Dorsolateral prefrontal cortex (tissue), 120 donors: ENCODE measurements at regions of chr13 and their contacts with region 1.

Region 1: DNA sequence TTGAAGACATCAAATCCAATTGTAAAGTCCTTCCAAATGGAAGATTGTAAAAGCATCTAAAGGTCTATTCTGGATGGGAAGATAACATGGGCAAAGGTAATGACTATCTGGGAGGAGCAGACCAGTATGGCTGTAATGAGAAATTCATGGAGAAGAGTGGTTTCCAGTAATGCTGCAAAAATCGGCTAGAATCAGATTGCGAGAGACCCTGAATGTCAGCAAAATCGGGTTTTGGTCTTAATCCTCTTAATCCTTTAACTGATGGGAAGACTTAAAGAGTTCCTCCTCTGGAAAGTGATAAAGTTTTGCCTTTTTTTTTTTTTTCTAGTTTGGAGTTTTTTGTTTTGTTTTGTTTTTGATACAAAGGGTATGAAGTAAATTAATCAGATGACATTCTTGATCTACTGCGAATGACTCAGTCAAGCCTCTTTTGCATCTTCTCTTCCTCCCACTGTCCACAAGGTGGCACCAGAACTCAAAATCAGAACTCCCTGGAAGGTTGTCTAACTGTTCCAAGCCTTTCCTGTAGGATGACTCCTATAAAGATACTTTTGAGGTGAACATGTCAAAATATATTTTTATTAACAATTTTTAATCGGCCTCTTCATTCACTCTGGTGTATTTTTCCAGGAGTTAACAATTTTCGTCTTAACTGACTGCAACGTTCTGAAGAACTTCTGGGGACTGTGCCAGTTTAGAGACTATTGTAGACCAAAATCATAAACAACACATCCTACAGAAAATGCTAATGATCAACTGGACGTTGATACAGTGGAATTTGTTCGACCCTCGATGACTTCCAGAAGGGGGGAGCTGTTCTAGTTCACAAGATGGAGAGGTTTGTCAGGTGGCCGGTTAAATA is 213.3 kb upstream of the MIR17HG start:
- DNase-seq: peak in 6 of 10 donors; percentile 7 to 50 (median 44)
- H3K4me3 ChIP-seq: peak overlapping the region in 1 of 59 donors; percentile 14
- H3K27ac ChIP-seq: no peak overlapping the region
- H3K27me3 ChIP-seq: peaks cover 0 to 3% (median 0%) of the 10 kb centered on the region in 45 donors
- CTCF ChIP-seq: peak; percentile 51 to 92 (median 83)

Region 2: GRCh38 chr13:91111476-91112201 is 22.5 kb before region 1 on chr13:
- intact Hi-C with region 1: no loop called
- DNase-seq: no peak
- H3K4me3 ChIP-seq: no peak overlapping the region
- H3K27ac ChIP-seq: no peak overlapping the region
- H3K27me3 ChIP-seq: peaks cover 0 to 9% (median 0%) of the 10 kb centered on the region in 45 donors
- CTCF ChIP-seq: no peak

Region 3: GRCh38 chr13:91185294-91185863 is 51.2 kb after region 1 on chr13:
- intact Hi-C with region 1: loop called (anchors 2 to 10 kb)
- DNase-seq: no peak
- H3K4me3 ChIP-seq: peak overlapping the region in 1 of 59 donors; percentile 18
- H3K27ac ChIP-seq: no peak overlapping the region
- H3K27me3 ChIP-seq: peaks cover 0 to 20% (median 0%) of the 10 kb centered on the region in 45 donors
- CTCF ChIP-seq: peak in 53 of 56 donors; percentile 22 to 72 (median 54)

Region 4: DNA sequence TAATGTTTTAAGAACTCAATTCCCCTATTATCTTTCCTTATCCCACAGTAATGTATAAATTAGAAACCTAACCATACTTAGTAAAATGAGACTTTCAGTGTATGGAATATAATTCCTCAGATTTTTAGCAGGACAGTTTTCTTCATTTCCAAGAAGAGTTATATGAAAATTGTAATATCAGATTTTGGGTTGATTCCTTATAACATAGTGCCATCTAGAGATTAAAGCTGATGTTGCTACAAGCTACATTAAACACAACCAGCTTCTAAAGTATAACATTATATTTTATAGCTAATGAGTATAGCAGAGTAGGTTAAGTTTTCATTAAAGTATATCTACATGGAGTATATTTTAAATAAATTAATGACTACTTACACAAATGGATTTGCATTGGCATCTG is 113.6 kb after region 1 on chr13:
- intact Hi-C with region 1: loop called (anchors 2 kb)
- DNase-seq: no peak
- H3K4me3 ChIP-seq: no peak overlapping the region
- H3K27ac ChIP-seq: no peak overlapping the region
- H3K27me3 ChIP-seq: peaks cover 0 to 22% (median 3%) of the 10 kb centered on the region in 45 donors
- CTCF ChIP-seq: peak in 55 of 56 donors; percentile 19 to 73 (median 49)